ENCODE measurements at regions of chr13 and their contacts with region 1.

Region 1: DNA sequence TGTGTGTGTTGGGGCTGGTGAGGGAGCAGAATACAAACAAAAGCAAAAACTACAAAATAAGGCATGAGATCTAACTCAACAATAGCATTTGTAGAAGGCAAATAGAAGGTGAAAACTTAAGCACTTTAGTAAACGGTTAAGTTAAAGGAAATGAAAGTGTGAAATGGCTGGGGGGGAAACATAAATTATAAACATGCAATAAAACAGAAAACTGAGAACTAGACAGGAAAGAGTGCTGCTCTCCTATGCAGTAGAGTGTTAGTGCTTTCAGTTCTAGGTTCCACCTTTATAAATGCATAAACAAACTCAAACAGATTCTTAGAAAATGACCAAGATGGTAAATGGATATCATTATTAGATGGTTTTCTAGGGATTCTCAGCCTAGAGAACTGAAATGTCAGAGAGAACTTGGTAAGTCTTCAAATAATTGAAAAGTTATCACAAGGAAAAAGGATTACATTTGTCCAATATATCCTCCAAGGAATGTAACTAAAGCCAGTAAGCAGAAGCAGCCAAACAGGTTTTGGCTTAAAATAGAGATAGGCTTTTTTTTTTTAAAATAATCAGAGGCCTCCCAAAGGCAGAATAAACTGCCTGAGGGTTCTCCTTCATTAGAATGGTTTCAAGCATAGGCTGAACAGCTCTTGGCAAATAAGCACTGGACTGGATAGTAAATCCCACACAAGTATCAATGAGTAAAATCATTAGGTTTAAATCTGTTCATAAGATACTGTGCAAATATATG is 23.3 kb downstream of the RBM26 start:
- DNase-seq: no peak
- ATAC-seq: no peak
- H3K4me3 ChIP-seq: no peak overlapping the region
- H3K27ac ChIP-seq: peak overlapping the region in 1 of 10 donors; percentile 32
- H3K4me1 ChIP-seq: peaks cover 0 to 54% (median 40%) of the 10 kb centered on the region in 9 donors
- H3K27me3 ChIP-seq: no peaks in the 10 kb centered on the region
- CTCF ChIP-seq: no peak

Region 2: DNA sequence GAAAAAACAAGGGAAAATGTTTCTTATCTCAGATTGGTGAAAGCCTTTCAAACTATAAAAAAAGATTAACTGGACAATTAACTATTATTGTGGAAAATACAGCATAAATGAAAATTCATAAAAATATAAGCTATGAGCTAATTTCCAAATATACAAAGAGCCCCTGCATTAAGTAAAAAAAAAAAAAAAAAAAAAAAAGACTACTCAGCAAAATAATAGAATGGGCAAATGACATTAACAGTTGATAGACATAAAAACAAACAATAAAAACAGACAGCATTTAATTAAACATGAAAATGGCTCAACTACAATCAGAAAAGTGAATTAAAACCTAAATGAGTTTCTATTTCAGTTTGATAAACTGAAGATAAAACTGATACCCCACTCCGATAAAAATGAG is 54.2 kb before region 1 on chr13:
- intact Hi-C with region 1: loop called in 1 of 10 experiments (anchors 2 kb)
- DNase-seq: no peak
- ATAC-seq: no peak
- H3K4me3 ChIP-seq: no peak overlapping the region
- H3K27ac ChIP-seq: no peak overlapping the region
- H3K4me1 ChIP-seq: no peaks in the 10 kb centered on the region
- H3K27me3 ChIP-seq: no peaks in the 10 kb centered on the region
- CTCF ChIP-seq: no peak

Region 3: DNA sequence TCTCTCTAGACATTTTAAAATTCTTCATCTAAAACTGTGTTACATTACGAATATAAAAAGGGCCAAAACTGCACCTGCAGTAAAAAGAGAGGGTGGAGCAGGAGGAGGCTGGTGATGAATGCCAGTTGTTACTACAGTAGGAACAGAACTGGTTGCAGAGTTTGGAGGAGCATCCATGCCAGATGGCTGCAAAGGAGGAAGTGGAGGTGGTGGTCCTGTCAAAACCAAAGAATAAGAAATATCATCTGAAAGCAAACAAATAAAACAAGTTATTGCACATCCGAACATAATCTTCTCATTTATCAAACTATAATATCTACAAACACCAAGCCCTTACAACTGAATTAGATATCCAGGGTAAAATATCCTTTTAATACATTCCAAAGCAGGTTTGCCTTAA is 16.7 kb before region 1 on chr13:
- intact Hi-C with region 1: loop called in 1 of 10 experiments (anchors 2 kb)
- DNase-seq: no peak
- ATAC-seq: no peak
- H3K4me3 ChIP-seq: no peak overlapping the region
- H3K27ac ChIP-seq: no peak overlapping the region
- H3K4me1 ChIP-seq: peaks cover 0 to 11% (median 4%) of the 10 kb centered on the region in 9 donors
- H3K27me3 ChIP-seq: no peaks in the 10 kb centered on the region
- CTCF ChIP-seq: no peak

Region 4: DNA sequence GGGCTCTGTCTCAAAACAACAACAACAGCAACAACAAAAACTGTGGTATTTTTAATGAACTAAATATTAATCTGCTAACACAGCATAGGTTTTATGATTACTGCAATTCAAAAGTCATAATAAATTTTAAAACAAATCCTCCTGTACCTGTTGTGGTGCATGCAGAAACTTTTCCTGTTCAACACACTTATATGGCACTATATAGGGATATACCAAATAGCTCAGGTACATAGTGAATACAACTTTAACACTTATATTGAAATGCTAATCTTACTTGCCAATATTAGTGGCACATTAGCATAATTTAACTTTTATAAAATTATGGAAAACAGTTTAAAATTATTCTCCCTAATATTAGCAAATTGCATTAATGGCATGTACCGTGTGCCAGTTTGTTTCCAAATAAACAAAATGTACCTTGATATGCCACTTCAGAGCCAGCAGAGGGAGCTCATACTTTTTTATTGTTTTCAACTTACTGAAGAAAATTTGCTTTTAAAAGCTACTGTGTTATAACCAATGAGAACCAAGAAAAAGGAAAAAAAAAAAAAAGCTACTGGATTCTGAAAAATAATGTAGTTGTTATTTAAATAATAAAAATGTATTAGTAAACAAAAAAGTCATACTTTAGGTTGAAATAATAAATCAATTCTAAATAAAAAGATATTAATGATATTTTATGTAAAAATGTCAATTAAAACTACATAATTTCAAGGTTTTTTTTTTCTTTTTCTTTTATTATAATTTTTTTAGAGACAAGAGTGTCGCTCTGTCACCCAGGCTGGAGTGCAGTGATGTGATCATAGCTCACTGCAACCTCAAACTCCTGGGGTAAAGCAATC is 41.3 kb after region 1 on chr13:
- intact Hi-C with region 1: no loop called
- DNase-seq: no peak
- ATAC-seq: peak in 2 of 8 donors; percentile 49 to 58
- H3K4me3 ChIP-seq: no peak overlapping the region
- H3K27ac ChIP-seq: no peak overlapping the region
- H3K4me1 ChIP-seq: no peaks in the 10 kb centered on the region
- H3K27me3 ChIP-seq: no peaks in the 10 kb centered on the region
- CTCF ChIP-seq: peak; percentile 48 to 81 (median 71)